Activated CD4-positive, alpha-beta memory T cell treated with anti-CD3 and anti-CD28 coated beads, Interleukin-2, amount 10 ng/mL, durations not matched to agents 7 days and 5 days (primary cell): ENCODE measurements at regions of chrX and their contacts with region 1.

Region 1: GRCh38 chrX:48574270-48575266 is at the start of gene RBM3:
- DNase-seq: peak; percentile 94
- H3K4me3 Mint-ChIP-seq: peak within 1 kb of the TSS; percentile 98
- H3K27ac Mint-ChIP-seq: peak within 1 kb of the TSS; percentile 99
- H3K4me1 Mint-ChIP-seq: peaks cover 42% of the 10 kb centered on the region
- H3K27me3 Mint-ChIP-seq: no peaks in the 10 kb centered on the region
- total RNA-seq, gene RBM3: 180 to 182 TPM

Region 2: GRCh38 chrX:48357681-48358080 is 216.9 kb before region 1 on chrX:
- CTCF ChIA-PET with region 1: no interaction called
- POLR2A ChIA-PET with region 1: no interaction called
- DNase-seq: no peak
- H3K4me3 Mint-ChIP-seq: no peak overlapping the region
- H3K27ac Mint-ChIP-seq: no peak overlapping the region
- H3K4me1 Mint-ChIP-seq: no peaks in the 10 kb centered on the region
- H3K27me3 Mint-ChIP-seq: peaks cover 2% of the 10 kb centered on the region

Region 3: GRCh38 chrX:48450076-48450475 is 124.5 kb before region 1 on chrX:
- CTCF ChIA-PET with region 1: no interaction called
- POLR2A ChIA-PET with region 1: no interaction called
- DNase-seq: no peak
- H3K4me3 Mint-ChIP-seq: no peak overlapping the region
- H3K27ac Mint-ChIP-seq: no peak overlapping the region
- H3K4me1 Mint-ChIP-seq: no peaks in the 10 kb centered on the region
- H3K27me3 Mint-ChIP-seq: no peaks in the 10 kb centered on the region

Region 4: DNA sequence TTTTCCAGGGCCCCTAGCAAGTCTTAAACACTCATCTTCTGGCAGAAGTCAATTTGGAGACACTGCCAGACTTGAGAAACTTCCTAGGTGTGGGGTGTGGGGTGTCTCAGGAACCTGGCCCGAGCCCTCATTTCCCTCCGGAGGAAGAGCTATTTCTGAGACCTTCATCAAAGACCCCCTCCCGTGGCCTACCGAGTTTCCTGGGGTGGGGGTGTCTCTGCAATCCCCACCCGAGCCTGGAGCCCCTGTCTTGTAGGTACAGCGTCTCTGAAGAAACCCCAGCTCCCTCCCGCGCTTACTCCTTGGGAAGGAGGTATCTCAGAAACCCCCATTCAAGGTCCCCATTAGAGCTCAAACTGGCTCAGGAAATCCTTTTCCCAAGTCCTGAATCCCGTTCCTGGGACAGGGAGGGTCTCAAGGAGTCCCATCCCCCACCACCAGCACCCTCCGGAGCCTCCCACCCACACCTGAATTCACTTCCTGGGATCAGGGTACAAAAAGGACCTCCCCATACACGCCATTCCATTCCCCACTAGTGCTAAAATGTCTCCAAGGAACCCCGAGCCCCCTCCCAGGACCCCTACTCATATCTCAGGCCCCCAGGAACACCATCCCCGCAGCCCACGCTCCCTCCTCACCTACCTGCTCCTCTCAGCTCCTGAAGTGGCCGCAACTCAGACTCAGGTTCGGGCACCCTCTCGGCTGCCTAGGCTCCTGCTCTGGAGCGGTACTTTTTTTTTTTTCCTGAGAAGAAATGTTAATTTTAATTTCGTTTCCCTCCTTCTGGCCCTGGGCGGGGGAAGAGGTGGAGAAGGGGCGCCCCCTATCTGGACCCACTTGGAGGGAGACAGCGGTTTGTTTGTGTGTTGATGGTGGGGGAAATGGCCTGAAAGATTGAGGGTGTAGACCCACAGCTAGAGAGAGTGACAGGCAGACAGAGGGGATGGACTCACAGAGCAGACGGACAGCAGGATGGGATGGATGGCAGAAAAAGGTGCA is 105.6 kb before region 1 on chrX:
- CTCF ChIA-PET with region 1: interaction called, 3 read pairs
- POLR2A ChIA-PET with region 1: interaction called, 20 read pairs
- DNase-seq: peak; percentile 52
- H3K4me3 Mint-ChIP-seq: peak overlapping the region; percentile 96
- H3K27ac Mint-ChIP-seq: peak overlapping the region; percentile 90
- H3K4me1 Mint-ChIP-seq: peaks cover 44% of the 10 kb centered on the region
- H3K27me3 Mint-ChIP-seq: no peaks in the 10 kb centered on the region

Region 5: GRCh38 chrX:48475774-48476577 is 98.6 kb before region 1 on chrX and contains the start of gene FTSJ1:
- CTCF ChIA-PET with region 1: interaction called, 4 read pairs
- POLR2A ChIA-PET with region 1: interaction called, 16 read pairs
- DNase-seq: peak; percentile 91
- H3K4me3 Mint-ChIP-seq: peak within 1 kb of the TSS; percentile 91
- H3K27ac Mint-ChIP-seq: peak within 1 kb of the TSS; percentile 85
- H3K4me1 Mint-ChIP-seq: peaks cover 37% of the 10 kb centered on the region
- H3K27me3 Mint-ChIP-seq: no peaks in the 10 kb centered on the region
- total RNA-seq, gene FTSJ1: 57.6 to 60.1 TPM

Region 6: DNA sequence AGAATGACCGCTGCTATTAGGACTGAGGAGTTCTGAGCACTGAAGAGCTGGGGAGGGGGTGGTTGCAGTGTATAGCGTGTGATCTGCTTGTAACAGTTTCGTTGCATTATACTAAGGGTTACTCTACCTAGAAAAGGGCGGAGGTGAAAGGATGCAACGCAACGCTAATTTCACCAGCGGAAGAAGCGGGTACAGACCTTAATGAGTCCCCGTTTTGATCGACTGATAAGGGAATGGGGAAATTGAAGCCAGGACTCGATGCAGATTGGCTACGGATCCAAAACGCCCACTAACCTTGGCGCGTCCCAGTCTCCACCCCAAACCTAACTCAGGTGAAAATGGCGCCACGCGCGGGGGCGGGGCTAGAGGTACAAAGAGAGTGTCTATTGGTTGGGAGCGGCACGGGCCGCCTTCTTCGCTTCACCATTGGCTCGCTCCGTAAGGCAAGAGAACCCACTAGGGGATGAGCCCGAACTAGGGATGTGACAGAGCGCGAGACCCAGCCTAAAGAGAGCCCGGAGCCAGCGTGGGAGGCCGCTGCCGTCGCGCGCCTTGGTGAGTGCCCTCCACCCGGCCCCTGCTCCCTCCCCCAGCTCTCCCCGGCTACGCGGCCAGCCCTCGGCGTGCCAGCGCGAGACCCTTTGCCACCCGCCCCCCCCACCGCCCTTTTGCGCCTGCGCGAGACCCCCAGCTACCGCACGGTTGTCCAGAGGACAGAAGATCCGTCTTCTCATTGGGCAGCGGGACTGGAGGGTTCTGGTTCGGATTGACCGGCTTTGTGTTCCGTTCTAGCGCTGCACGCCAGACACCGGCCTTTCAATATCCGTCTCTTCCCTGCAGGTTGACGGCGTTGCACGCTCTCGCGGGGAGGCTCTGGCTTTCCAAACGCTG is 53.0 kb before region 1 on chrX and contains the start of gene EBP:
- CTCF ChIA-PET with region 1: interaction called, 3 read pairs
- POLR2A ChIA-PET with region 1: interaction called, 18 read pairs
- DNase-seq: peak; percentile 96
- H3K4me3 Mint-ChIP-seq: peak within 1 kb of the TSS; percentile 91
- H3K27ac Mint-ChIP-seq: peak within 1 kb of the TSS; percentile 99
- H3K4me1 Mint-ChIP-seq: peaks cover 44% of the 10 kb centered on the region
- H3K27me3 Mint-ChIP-seq: no peaks in the 10 kb centered on the region
- total RNA-seq, gene EBP: 446 to 461 TPM

Region 7: DNA sequence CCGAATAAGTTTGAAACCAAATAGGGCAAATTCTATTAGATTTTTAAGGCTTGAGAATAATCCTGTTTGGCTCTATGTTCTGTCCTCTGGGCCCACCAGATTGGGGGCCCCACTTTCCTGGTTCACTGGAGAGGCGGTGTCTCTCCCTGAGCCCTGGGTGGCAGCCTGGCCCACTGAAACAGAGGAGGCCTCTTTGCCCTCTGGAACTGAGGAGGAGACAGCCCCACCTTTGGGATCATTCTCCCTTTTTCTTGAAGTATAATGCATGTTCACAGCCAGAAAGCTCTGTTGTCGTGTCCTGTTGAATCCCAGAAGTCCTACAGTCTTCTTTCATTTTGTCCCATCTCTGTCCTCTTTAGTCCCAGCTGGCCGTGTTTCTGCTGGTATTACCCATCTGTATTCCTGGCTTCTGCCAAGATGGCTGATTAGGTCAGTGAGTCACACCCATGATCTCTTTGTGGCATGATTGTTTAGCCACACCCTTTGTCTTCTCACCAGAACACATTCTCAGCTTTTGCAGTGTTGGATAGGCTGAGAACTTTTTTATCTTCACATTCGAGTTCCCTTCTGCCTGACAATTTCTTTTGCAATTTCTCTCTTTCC is 43.1 kb before region 1 on chrX:
- CTCF ChIA-PET with region 1: no interaction called
- POLR2A ChIA-PET with region 1: interaction called, 16 read pairs
- DNase-seq: no peak
- H3K4me3 Mint-ChIP-seq: peak overlapping the region; percentile 14
- H3K27ac Mint-ChIP-seq: peak overlapping the region; percentile 97
- H3K4me1 Mint-ChIP-seq: peaks cover 51% of the 10 kb centered on the region
- H3K27me3 Mint-ChIP-seq: no peaks in the 10 kb centered on the region

Region 8: DNA sequence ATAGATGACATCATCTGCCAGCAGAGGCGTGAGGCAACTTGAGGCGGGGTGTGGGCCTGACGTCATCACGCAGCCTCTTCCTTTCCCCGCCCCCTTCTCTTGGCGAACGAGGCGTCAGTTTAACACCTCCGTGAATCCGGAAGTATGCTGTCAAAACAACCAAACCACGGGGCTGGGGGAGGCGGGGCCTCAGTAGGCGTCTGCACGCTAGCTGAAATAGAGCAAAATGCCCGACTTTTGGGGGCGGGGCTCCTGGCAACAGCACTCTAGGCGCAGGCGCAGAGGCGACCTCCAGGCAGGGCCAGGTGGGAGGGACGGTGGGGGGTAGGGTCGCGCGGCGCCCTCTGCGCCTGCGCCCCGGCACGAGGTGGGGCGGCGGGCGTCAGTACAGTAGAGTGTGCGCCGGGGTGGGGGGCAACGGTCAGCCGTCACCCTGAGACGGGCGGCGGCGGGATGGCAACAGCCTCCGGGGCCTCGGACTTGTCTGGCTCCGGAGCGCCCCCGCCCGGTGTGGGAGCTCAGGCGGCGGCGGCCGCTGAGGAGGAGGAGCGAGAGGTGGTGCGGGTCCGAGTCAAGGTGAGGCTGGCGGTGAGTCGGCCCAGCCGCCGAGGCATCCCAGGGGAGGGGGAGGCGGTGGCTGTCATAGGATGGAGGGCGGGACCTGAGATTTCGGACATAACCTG is 35.1 kb before region 1 on chrX and contains the start of gene TBC1D25:
- CTCF ChIA-PET with region 1: interaction called, 17 read pairs
- POLR2A ChIA-PET with region 1: interaction called, 50 read pairs
- DNase-seq: peak; percentile 97
- H3K4me3 Mint-ChIP-seq: peak within 1 kb of the TSS; percentile 93
- H3K27ac Mint-ChIP-seq: peak within 1 kb of the TSS; percentile 95
- H3K4me1 Mint-ChIP-seq: peaks cover 29% of the 10 kb centered on the region
- H3K27me3 Mint-ChIP-seq: no peaks in the 10 kb centered on the region
- total RNA-seq, gene TBC1D25: 21.7 to 22.3 TPM

Region 9: GRCh38 chrX:48560681-48561080 is 13.9 kb before region 1 on chrX:
- CTCF ChIA-PET with region 1: no interaction called
- POLR2A ChIA-PET with region 1: interaction called, 11 read pairs
- DNase-seq: no peak
- H3K4me3 Mint-ChIP-seq: no peak overlapping the region
- H3K27ac Mint-ChIP-seq: no peak overlapping the region
- H3K4me1 Mint-ChIP-seq: no peaks in the 10 kb centered on the region
- H3K27me3 Mint-ChIP-seq: no peaks in the 10 kb centered on the region